Prostate gland (tissue), 2 donors: ENCODE measurements at regions of chr7 and their contacts with region 1.

Region 1: GRCh38 chr7:4641667-4642467 is 40.2 kb upstream of the FOXK1 start:
- DNase-seq: peak; percentile 88
- H3K4me3 ChIP-seq: peak overlapping the region; percentile 51
- H3K27ac ChIP-seq: peak overlapping the region; percentile 66 to 78
- H3K4me1 ChIP-seq: no peaks in the 10 kb centered on the region
- H3K27me3 ChIP-seq: no peaks in the 10 kb centered on the region
- CTCF ChIP-seq: peak; percentile 50 to 77 (median 70)
- POLR2A ChIP-seq: peak; percentile 59

Region 2: DNA sequence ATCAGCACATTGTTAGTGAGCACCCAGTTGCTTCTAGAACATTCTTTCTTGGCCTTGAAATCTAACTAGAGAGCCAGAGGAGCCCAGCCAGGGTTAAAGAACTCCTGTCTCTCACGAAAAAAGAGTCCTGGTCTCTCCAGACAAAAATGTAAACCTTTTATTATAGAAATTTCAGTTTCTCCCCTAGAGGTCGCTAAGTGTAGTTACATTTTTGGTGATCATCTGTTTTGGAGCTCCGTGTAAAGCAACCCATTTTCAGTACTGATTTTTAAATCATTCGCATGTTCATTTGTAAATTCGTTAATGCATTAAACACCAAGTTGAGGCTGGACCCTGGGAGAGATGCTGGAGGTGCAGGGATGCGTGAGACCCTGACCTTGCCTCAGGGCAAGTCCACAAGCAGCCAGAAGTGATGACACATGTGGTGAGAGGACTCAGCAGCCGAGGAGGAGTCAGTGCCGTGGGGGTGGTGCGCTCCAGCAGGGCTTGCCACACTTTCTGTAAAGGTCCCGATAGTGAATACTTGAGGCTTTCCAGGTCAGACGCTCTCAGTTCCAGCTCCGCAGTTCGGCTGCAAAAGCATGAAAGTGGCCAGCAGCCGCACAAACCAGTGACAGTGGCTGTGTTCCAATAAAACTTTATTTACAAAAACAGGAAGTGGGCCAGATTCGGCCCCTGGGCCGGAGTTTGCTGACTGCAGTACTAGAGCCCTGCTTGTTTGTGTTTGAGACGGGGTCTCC is 538.3 kb before region 1 on chr7:
- intact Hi-C with region 1: no loop called
- DNase-seq: no peak
- H3K4me3 ChIP-seq: no peak overlapping the region
- H3K27ac ChIP-seq: no peak overlapping the region
- H3K4me1 ChIP-seq: no peaks in the 10 kb centered on the region
- H3K27me3 ChIP-seq: no peaks in the 10 kb centered on the region
- CTCF ChIP-seq: peak in 1 of 4 experiments; percentile 25
- POLR2A ChIP-seq: no peak

Region 3: GRCh38 chr7:4675771-4676367 is 34.0 kb after region 1 on chr7:
- intact Hi-C with region 1: loop called (anchors 2 kb)
- DNase-seq: no peak
- H3K4me3 ChIP-seq: no peak overlapping the region
- H3K27ac ChIP-seq: no peak overlapping the region
- H3K4me1 ChIP-seq: no peaks in the 10 kb centered on the region
- H3K27me3 ChIP-seq: no peaks in the 10 kb centered on the region
- CTCF ChIP-seq: no peak
- POLR2A ChIP-seq: no peak

Region 4: DNA sequence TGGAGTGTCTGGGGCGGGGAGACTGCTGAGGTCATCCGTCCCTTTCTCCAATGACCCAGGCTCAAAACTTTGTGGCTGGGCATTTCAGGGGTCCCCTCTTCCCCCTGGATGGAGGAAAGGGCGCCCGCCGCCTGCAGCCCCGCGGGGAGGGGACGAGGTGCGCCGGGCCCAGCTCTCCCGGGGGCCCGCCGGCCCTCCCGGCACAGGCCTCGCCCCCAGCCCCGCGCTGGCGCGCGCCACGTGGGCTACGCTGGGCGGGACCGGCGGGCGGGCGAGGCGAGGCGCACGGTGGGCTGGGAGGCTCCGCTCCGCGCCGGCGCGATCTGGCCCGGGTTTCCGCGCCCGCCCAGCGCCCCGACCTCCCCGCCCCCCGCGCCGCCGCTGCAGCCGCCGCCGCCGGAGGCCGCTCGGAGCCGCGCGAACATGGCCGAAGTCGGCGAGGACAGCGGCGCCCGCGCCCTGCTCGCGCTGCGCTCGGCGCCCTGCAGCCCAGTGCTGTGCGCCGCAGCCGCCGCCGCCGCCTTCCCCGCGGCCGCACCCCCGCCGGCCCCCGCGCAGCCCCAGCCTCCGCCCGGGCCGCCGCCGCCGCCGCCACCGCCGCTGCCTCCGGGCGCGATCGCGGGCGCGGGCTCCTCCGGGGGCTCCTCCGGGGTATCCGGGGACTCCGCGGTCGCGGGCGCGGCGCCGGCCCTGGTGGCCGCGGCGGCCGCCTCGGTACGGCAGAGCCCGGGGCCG is 40.2 kb after region 1 on chr7 and contains the start of gene FOXK1:
- intact Hi-C with region 1: loop called (anchors 1 kb)
- DNase-seq: peak; percentile 57
- H3K4me3 ChIP-seq: peak within 1 kb of the TSS; percentile 78 to 79
- H3K27ac ChIP-seq: peak within 1 kb of the TSS; percentile 89 to 91
- H3K4me1 ChIP-seq: peaks cover 6% of the 10 kb centered on the region
- H3K27me3 ChIP-seq: no peaks in the 10 kb centered on the region
- CTCF ChIP-seq: peak in 2 of 4 experiments; percentile 5 to 15
- POLR2A ChIP-seq: no peak
- total RNA-seq, gene FOXK1: 17.3 to 47.5 TPM

Region 5: DNA sequence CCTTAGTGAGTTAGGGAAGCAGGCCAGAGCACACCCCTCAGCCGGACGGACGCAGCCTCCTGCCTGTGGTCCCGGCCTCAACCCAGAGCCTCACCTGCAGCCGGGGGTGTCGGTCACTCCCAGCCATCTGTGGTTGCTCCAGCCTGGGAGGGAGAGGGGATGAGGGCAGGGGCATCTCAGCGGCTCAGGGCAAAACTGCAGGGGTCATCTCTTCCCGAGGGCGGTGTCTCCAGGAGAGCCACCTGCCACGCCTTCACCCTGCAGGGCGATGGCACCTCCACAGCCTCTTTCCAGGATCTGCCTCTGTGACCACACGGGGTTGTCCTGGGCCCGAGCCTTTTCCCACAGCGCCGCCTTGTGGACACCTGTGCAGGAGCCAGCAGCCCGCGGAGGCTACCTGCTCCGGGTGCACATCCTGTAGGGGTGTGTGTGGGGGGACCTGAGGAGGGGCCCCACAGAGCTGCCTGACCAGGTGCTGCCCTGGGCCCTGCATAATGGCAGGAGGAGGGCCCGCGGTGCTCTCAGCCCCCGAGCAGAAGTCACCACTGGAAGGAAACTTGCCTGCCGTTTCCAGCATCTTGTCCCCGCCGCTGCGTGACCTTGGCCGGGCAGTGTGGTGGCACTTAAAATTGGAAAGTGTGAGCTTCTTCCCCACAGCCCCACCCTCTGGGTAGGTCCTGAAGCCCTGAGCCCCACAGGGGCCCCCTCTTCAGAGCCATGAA is 112.0 kb after region 1 on chr7:
- intact Hi-C with region 1: loop called (anchors 2 kb)
- DNase-seq: peak; percentile 77
- H3K4me3 ChIP-seq: no peak overlapping the region
- H3K27ac ChIP-seq: no peak overlapping the region
- H3K4me1 ChIP-seq: no peaks in the 10 kb centered on the region
- H3K27me3 ChIP-seq: no peaks in the 10 kb centered on the region
- CTCF ChIP-seq: peak; percentile 91 to 96 (median 94)
- POLR2A ChIP-seq: no peak